ENCODE measurements at regions of chr10 and their contacts with region 1.

Region 1: GRCh38 chr10:95363303-95363912 is 72.6 kb upstream of the PDLIM1 start:
- DNase-seq: peak in 20 of 42 donors; percentile 33 to 80 (median 63)

Region 2: DNA sequence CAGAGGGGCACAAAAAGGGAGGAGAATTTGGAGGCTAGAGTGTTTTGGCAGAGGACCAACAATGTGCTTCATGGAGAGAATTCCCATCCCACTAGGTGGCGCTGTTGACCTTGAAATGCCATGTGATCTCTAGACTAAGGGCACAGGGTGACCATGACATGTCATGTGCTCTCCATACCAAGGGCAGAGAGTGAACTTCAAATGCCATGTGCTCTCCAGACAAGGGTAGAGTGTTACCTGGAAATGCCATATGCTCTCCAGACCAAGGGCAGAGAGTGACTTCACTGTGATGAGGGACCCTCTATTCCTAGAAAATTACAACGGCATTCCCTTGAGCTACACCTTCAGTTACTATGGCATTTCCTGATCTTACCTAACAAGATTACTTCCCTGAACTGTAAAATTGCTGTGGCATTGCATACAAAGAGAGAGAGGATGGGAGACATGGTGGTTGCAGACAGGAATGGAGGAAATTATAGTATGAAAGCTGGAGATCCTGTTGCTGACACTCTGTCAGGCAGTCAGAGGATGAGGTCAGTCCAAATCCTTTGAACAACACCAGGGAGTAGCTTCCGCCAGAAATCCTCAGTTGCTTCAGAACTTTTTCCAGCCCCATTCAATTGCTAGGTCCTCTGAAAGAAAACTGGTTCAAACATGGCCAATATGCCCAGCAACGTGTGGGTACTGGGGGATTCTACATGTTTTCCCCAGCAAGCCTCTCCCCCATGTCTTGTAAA is 230.2 kb before region 1 on chr10:
- intact Hi-C with region 1: loop called (anchors 5 kb)
- DNase-seq: peak in 38 of 42 donors; percentile 3 to 81 (median 57)

Region 3: GRCh38 chr10:95245425-95246055 is 117.9 kb before region 1 on chr10:
- intact Hi-C with region 1: loop called (anchors 2 kb)
- DNase-seq: peak in 2 of 42 donors; percentile 28 to 34

Measured in head of caudate nucleus (tissue), 42 donors.